GM12878 (cell line): ENCODE measurements at regions of chr4 and their contacts with region 1.

Region 1: GRCh38 chr4:163681208-163681821 is 186.8 kb downstream of the TMA16 start:
- DNase-seq: no peak
- ATAC-seq: peak; percentile 93
- H3K4me3 ChIP-seq: no peak overlapping the region
- H3K27ac ChIP-seq: no peak overlapping the region
- H3K4me1 ChIP-seq: no peaks in the 10 kb centered on the region
- H3K27me3 ChIP-seq: no peaks in the 10 kb centered on the region
- CTCF ChIP-seq: peak; percentile 58 to 61 (median 60)
- EP300 ChIP-seq: no peak
- POLR2A ChIP-seq: no peak
- RAD21 ChIP-seq: peak; percentile 89

Region 2: GRCh38 chr4:163587867-163588266 is 93.4 kb before region 1 on chr4:
- CTCF ChIA-PET with region 1: interaction called, 10 read pairs
- POLR2A ChIA-PET with region 1: interaction called, 4 read pairs
- RAD21 ChIA-PET with region 1: interaction called, 9 read pairs
- SMC1A ChIA-PET with region 1: interaction called, 19 read pairs
- in situ Hi-C with region 1: no loop called
- intact Hi-C with region 1: no loop called
- DNase-seq: peak; percentile 73
- ATAC-seq: peak; percentile 78
- H3K4me3 ChIP-seq: no peak overlapping the region
- H3K27ac ChIP-seq: peak overlapping the region; percentile 25; the same call in 1 of the 2 replicates
- H3K4me1 ChIP-seq: peaks cover 33% of the 10 kb centered on the region
- H3K27me3 ChIP-seq: no peaks in the 10 kb centered on the region
- CTCF ChIP-seq: peak; percentile 28 to 62 (median 46); a peak in 5 of 6 replicates
- EP300 ChIP-seq: peak; percentile 63 to 78; a peak in 3 of 4 replicates
- POLR2A ChIP-seq: no peak
- RAD21 ChIP-seq: peak; percentile 20; the same call in 1 of the 2 replicates

Region 3: DNA sequence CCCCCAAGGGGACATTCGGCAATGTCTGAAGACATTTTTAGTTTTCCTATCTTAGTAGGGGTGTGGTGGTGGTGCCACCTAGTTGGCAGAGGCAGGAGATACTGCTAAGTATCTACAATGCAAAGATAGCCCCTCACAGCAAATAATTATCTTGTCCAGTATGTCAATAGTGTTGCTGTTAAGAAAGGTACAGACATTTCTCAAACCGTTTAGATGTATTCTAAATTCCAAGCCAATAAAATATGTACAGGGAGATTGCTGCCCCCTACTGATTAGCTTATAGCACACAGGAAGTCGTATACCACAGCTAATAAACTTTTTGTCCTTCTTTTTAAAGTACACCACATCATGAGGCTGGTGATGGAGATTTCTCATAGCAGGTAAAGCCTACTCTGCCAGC is 73.7 kb after region 1 on chr4:
- CTCF ChIA-PET with region 1: interaction called, 50 read pairs
- POLR2A ChIA-PET with region 1: interaction called, 4 read pairs
- RAD21 ChIA-PET with region 1: interaction called, 31 read pairs
- SMC1A ChIA-PET with region 1: interaction called, 39 read pairs
- in situ Hi-C with region 1: no loop called
- intact Hi-C with region 1: loop called (anchors 1 kb)
- DNase-seq: peak; percentile 12
- ATAC-seq: peak; percentile 92
- H3K4me3 ChIP-seq: no peak overlapping the region
- H3K27ac ChIP-seq: no peak overlapping the region
- H3K4me1 ChIP-seq: no peaks in the 10 kb centered on the region; the same call in 1 of the 2 replicates
- H3K27me3 ChIP-seq: no peaks in the 10 kb centered on the region
- CTCF ChIP-seq: peak in 2 of 3 experiments; percentile 47 to 65
- EP300 ChIP-seq: no peak
- POLR2A ChIP-seq: no peak
- RAD21 ChIP-seq: peak; percentile 64

Region 4: DNA sequence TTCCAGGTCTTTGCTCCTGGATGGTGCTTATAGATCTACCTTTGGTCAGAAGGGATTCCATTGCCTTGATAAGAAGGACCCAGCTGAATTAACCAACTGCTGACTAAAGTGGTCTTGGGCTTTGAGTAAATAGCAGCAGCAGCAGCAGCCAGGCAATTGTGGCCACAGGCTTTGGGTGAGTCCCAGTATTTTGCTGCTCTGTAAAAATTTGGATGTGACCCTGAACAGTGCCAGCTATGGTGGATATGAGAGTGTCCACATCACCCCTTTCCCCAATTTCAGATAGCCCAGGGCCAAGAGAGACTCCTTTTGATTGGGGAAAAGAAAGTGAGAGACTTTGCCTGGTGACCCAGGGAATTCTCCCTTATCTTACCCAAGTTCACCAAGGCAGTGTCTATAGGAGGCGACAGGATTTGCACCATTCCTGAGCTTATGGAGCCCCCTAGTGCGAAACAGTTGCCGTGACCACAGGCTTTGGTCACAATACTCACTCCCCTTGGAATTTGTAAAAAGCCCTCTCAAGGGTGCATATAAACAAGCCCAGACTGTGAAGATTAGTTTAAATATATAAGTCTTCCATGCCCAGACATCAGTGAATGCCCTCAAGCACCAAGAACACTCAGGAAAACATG is 331.2 kb after region 1 on chr4:
- CTCF ChIA-PET with region 1: interaction called, 3 read pairs
- POLR2A ChIA-PET with region 1: no interaction called
- RAD21 ChIA-PET with region 1: no interaction called
- SMC1A ChIA-PET with region 1: interaction called, 3 read pairs
- in situ Hi-C with region 1: no loop called
- intact Hi-C with region 1: loop called (anchors 5 kb)
- DNase-seq: no peak
- ATAC-seq: peak; percentile 78
- H3K4me3 ChIP-seq: no peak overlapping the region
- H3K27ac ChIP-seq: no peak overlapping the region
- H3K4me1 ChIP-seq: no peaks in the 10 kb centered on the region
- H3K27me3 ChIP-seq: no peaks in the 10 kb centered on the region
- CTCF ChIP-seq: peak; percentile 30 to 54 (median 40); a peak in 4 of 6 replicates
- EP300 ChIP-seq: no peak
- POLR2A ChIP-seq: no peak
- RAD21 ChIP-seq: peak; percentile 66